CD4-positive, alpha-beta T cell (primary cell): ENCODE measurements at regions of chr6 and their contacts with region 1.

Region 1: DNA sequence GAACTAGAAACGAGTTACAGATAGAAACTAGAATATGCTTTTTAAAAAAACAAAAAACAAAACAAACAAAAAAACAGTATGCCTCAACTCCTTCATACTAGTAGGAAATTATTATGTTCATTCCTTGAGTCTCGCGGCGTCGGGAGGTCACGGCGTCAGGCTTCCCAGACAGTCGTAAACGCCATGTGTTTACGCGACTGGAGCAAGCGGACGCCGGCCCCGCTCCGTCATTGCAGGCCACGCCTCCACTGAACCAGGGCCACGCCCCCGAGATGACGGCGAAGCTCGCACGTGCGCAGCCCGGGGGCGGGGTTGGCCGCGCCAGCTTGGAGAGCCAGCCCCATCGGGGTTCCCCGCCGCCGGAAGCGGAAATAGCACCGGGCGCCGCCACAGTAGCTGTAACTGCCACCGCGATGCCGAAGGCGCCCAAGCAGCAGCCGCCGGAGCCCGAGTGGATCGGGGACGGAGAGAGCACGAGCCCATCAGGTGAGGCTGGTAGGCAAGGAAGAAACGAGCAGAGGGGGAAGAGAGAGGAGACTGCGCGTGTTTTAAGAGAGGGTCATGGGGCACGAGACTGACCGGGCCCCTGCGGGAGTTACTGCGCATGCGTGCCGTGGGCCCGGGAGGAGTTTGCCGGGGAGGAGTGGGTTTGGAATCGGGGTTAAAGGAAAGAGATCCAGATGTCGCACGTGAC is at the start of gene ABCF1:
- DNase-seq: peak; percentile 97 to 100 (median 99)
- ATAC-seq: peak; percentile 90
- H3K4me3 ChIP-seq: peak within 1 kb of the TSS; percentile 82
- H3K4me3 Mint-ChIP-seq: peak within 1 kb of the TSS; percentile 100
- H3K27ac ChIP-seq: peak within 1 kb of the TSS; percentile 94 to 98
- H3K27ac Mint-ChIP-seq: peak within 1 kb of the TSS; percentile 98
- H3K4me1 ChIP-seq: peaks cover 47% of the 10 kb centered on the region
- H3K4me1 Mint-ChIP-seq: peaks cover 56% of the 10 kb centered on the region
- H3K27me3 ChIP-seq: no peaks in the 10 kb centered on the region
- H3K27me3 Mint-ChIP-seq: no peaks in the 10 kb centered on the region
- CTCF ChIP-seq: no peak
- total RNA-seq, gene ABCF1: 86.1 to 88.0 TPM

Region 2: DNA sequence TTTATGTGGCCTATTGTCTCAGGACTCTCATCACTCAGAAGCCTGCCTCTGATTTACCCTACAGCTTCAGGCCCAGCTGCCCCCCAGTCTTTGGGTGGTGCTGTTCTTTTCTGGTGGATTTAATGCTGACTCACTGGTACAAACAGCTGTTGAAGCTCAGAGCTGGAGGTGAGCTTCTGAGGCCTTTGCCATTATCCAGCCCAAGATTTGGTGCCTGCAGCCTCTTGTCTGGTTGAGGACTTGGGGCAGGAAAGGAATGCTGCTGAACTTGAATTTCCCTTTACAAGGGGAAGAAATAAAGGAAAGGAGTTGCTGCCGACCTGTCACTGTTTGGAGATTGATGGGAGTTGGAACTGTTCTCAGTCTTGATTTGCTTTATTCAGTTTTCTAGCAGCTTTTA is 19.8 kb after region 1 on chr6:
- CTCF ChIA-PET with region 1: no interaction called
- POLR2A ChIA-PET with region 1: interaction called, 21 read pairs
- intact Hi-C with region 1: no loop called
- DNase-seq: no peak
- ATAC-seq: no peak
- H3K4me3 ChIP-seq: no peak overlapping the region
- H3K4me3 Mint-ChIP-seq: no peak overlapping the region
- H3K27ac ChIP-seq: no peak overlapping the region
- H3K27ac Mint-ChIP-seq: no peak overlapping the region
- H3K4me1 ChIP-seq: no peaks in the 10 kb centered on the region
- H3K4me1 Mint-ChIP-seq: peaks cover 12% of the 10 kb centered on the region
- H3K27me3 ChIP-seq: no peaks in the 10 kb centered on the region
- H3K27me3 Mint-ChIP-seq: no peaks in the 10 kb centered on the region
- CTCF ChIP-seq: no peak